AG04449 (cell line): ENCODE measurements at regions of chr4 and their contacts with region 1.

Region 1: GRCh38 chr4:103036169-103036568 is 16.7 kb upstream of the SLC9B1 start:
- DNase-seq: no peak
- H3K4me3 ChIP-seq: no peak overlapping the region
- CTCF ChIP-seq: no peak

Region 2: DNA sequence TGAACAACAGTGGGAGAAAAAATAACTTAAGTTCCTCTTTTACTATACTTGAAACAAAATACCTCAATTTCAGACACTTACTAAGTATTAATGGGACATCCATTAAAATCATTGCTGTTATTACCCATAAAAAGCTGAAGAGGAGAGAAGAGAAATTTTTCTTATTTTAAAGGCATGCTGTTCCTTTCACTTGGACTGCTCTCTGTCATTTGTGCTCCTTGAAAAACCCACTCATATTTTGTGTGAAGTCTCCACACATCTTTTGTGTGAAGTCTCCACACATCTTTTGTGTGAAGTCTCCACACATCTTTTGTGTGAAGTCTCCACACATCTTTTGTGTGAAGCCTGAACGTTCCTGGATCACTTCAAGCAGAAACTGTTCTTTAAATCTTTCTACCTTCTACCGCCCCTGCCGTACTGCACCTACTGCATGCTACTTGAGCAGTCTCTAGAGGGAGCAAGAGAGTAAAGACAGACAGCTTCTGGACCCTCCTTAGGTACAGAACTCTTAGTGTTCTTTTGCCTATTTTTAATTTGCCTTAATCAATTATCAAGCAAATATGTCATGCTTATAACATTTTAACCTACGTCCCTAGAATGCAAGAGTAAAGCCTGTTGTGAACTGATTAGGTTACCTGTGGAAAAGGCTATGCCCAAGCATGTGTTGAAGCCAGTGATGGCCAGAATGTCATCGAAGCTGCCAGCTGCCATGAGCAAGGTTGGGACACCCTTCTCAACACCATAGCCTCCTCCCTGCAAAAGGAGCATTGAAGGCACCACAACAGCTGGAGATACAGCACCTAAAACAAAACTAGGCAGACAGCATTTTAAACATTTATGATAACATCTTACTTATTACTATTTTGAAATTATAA is 10.5 kb after region 1 on chr4:
- CTCF ChIA-PET with region 1: interaction called, 12 read pairs
- POLR2A ChIA-PET with region 1: no interaction called
- DNase-seq: no peak
- H3K4me3 ChIP-seq: no peak overlapping the region
- CTCF ChIP-seq: peak; percentile 70